ENCODE measurements at regions of chr6 and their contacts with region 1.

Region 1: DNA sequence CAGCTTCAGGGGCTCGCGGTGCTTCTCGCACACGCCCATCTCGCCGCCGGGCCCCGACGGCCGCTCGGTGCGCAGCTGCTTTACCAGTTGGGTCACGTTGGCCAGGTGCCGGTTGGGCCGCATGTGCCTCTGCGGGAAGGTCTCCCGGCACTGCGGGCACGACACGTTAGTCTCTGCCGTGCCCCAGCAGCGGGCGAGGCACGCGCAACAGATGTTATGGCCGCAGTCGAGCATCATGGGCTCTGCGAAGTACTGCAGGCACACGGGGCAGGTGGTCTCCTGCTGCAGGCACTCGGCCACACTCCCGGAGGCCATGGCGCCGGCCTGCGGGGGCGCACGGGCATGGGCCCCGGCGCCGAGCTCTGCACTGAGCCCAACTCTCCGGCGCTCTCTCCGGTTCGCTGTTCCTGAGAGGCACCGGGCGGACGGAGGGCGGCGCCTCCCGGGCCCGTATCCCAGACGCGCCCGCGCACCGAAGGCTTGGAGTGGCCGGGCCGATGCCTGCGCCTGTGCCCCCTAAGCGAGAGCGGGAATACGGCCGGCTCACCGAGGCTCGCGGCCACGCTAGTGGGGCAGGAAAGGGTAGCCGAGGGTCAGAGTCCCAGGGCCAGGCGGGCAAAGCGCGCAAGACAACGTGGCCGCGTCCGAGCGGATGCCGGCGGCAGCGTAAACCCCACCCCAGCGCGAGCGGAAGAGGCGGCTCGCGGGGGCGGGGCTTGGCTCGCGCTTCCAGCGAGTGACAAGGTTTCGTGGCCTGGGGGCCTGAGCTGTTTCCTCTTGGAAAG is at the start of gene TRIM27:
- DNase-seq: peak; percentile 67 to 87 (median 80)
- ATAC-seq: peak; percentile 89
- H3K4me3 ChIP-seq: peak within 1 kb of the TSS; percentile 87
- H3K4me3 Mint-ChIP-seq: peak within 1 kb of the TSS; percentile 87 to 99 (median 95)
- H3K27ac ChIP-seq: peak within 1 kb of the TSS; percentile 86
- H3K27ac Mint-ChIP-seq: peak within 1 kb of the TSS; percentile 86 to 96 (median 92)
- H3K4me1 ChIP-seq: peaks cover 20 to 34% of the 10 kb centered on the region in 2 donors
- H3K4me1 Mint-ChIP-seq: peaks cover 28 to 52% (median 41%) of the 10 kb centered on the region in 7 donors
- H3K27me3 ChIP-seq: no peaks in the 10 kb centered on the region
- H3K27me3 Mint-ChIP-seq: no peaks in the 10 kb centered on the region
- total RNA-seq, gene TRIM27: 22.9 to 93.9 (median 67.5) TPM

Region 2: DNA sequence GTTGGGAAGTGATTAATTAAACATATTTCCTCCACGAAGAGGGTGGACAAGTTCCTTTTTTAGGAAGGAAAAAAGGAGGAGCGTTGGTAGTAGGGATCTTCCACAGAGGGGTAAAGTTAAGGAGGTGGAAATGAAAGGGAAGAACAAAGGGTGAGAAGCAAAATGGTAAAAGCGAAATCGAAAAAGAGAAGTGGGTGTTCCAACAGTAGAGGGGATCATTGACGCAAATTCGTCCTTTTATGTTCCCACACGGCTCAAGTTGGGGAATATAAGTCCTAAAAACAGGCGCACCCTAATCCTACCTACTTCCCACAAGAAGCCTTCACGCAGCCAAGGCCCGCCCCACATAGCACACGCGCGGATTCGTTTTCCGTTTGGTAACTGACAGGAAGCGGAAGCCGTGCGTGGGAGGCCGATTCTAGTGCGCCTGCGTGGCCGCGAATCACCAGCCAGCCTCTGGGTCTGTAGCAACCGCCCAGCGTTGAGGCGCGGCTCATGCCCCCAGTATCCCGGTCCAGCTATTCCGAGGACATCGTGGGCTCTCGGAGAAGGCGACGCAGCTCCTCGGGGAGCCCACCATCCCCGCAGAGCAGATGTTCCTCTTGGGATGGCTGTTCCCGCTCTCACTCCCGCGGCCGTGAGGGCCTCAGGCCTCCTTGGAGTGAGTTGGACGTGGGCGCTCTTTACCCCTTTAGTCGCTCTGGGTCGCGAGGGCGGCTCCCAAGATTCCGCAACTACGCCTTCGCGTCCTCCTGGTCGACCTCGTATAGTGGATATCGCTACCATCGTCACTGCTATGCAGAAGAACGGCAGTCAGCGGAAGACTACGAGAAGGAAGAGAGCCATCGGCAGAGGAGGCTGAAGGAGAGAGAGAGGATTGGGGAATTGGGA is 664.4 kb before region 1 on chr6 and contains the start of gene NKAPL:
- CTCF ChIA-PET with region 1: no interaction called
- POLR2A ChIA-PET with region 1: no interaction called
- intact Hi-C with region 1: no loop called
- DNase-seq: peak in 7 of 9 donors; percentile 13 to 52 (median 38)
- ATAC-seq: peak; percentile 80
- H3K4me3 ChIP-seq: peak within 1 kb of the TSS; percentile 1
- H3K4me3 Mint-ChIP-seq: peak within 1 kb of the TSS in 8 of 10 donors; percentile 16 to 75 (median 52)
- H3K27ac ChIP-seq: no peak within 1 kb of the TSS
- H3K27ac Mint-ChIP-seq: peak within 1 kb of the TSS in 4 of 9 donors; percentile 28 to 81 (median 43)
- H3K4me1 ChIP-seq: peaks cover 0 to 4% of the 10 kb centered on the region in 2 donors
- H3K4me1 Mint-ChIP-seq: peaks cover 0 to 14% (median 10%) of the 10 kb centered on the region in 7 donors
- H3K27me3 ChIP-seq: no peaks in the 10 kb centered on the region
- H3K27me3 Mint-ChIP-seq: peaks cover 0 to 16% (median 6%) of the 10 kb centered on the region in 5 donors
- total RNA-seq, gene NKAPL: 0.12 to 0.30 (median 0.25) TPM in 4 of 5 experiments, not detected in the other

Region 3: GRCh38 chr6:28863604-28864320 is 59.7 kb before region 1 on chr6:
- CTCF ChIA-PET with region 1: no interaction called
- POLR2A ChIA-PET with region 1: interaction called, 44 read pairs
- intact Hi-C with region 1: loop called (anchors 1 kb)
- DNase-seq: peak; percentile 60 to 93 (median 89)
- ATAC-seq: peak; percentile 64
- H3K4me3 ChIP-seq: peak overlapping the region; percentile 95
- H3K4me3 Mint-ChIP-seq: peak overlapping the region; percentile 90 to 98 (median 92)
- H3K27ac ChIP-seq: peak overlapping the region; percentile 75
- H3K27ac Mint-ChIP-seq: peak overlapping the region; percentile 89 to 100 (median 95)
- H3K4me1 ChIP-seq: peaks cover 11 to 18% of the 10 kb centered on the region in 2 donors
- H3K4me1 Mint-ChIP-seq: peaks cover 15 to 69% (median 53%) of the 10 kb centered on the region in 7 donors
- H3K27me3 ChIP-seq: no peaks in the 10 kb centered on the region
- H3K27me3 Mint-ChIP-seq: peaks cover 0 to 30% (median 4%) of the 10 kb centered on the region in 5 donors

Region 4: DNA sequence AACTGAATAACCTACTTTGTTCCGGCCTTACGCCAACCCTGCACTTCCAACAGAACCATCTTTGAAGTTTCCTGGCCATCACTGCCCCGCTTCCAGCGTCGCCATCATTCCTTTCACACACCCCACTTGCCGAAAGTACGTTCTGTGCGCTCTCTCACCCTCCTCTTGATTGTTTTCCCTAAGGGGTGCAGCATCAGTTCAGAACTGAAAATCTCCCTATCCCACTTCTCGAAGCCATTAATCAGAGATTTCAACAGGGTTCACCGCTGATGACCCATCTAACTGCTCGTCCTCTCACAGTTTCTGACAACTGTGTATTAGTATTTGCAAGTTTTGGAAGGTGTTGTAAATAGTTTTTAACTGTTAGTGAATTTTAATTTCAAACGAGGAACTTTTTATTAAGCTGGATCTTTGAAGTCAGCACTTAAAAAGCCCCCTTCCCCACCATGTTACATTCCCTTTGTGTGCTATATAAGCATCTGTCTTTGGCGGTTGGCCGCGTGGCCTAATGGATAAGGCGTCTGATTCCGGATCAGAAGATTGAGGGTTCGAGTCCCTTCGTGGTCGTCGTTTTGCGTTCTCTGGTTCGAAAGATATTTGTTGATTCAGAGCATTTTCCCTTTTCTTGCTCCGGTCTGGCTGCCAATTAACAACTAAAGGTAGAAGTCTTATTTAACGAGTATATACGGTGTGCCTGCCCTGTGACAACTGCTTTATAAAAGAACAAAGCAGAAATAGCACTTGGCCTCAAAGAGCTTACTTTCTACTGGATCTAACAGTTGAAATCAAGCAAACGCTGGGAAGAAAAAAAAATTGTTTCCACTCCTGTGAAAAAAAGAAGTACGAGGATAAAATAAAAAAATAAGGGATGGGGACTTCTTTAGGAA is 42.4 kb before region 1 on chr6:
- CTCF ChIA-PET with region 1: no interaction called
- POLR2A ChIA-PET with region 1: interaction called, 46 read pairs
- intact Hi-C with region 1: loop called (anchors 1 kb)
- DNase-seq: peak in 8 of 9 donors; percentile 39 to 73 (median 57)
- ATAC-seq: no peak
- H3K4me3 ChIP-seq: peak overlapping the region; percentile 57
- H3K4me3 Mint-ChIP-seq: peak overlapping the region; percentile 12 to 92 (median 89)
- H3K27ac ChIP-seq: peak overlapping the region; percentile 12
- H3K27ac Mint-ChIP-seq: peak overlapping the region; percentile 14 to 98 (median 91)
- H3K4me1 ChIP-seq: peaks cover 8 to 26% of the 10 kb centered on the region in 2 donors
- H3K4me1 Mint-ChIP-seq: peaks cover 19 to 55% (median 45%) of the 10 kb centered on the region in 7 donors
- H3K27me3 ChIP-seq: no peaks in the 10 kb centered on the region
- H3K27me3 Mint-ChIP-seq: peaks cover 0 to 39% (median 3%) of the 10 kb centered on the region in 5 donors

Region 5: GRCh38 chr6:28907394-28907793 is 16.1 kb before region 1 on chr6:
- CTCF ChIA-PET with region 1: interaction called, 4 read pairs
- POLR2A ChIA-PET with region 1: interaction called, 13 read pairs
- intact Hi-C with region 1: no loop called
- DNase-seq: no peak
- ATAC-seq: no peak
- H3K4me3 ChIP-seq: no peak overlapping the region
- H3K4me3 Mint-ChIP-seq: no peak overlapping the region
- H3K27ac ChIP-seq: no peak overlapping the region
- H3K27ac Mint-ChIP-seq: peak overlapping the region in 2 of 9 donors; percentile 16 to 21
- H3K4me1 ChIP-seq: no peaks in the 10 kb centered on the region
- H3K4me1 Mint-ChIP-seq: peaks cover 0 to 12% (median 3%) of the 10 kb centered on the region in 7 donors
- H3K27me3 ChIP-seq: no peaks in the 10 kb centered on the region
- H3K27me3 Mint-ChIP-seq: no peaks in the 10 kb centered on the region